ENCODE measurements at regions of chr2 and their contacts with region 1.

Region 1: DNA sequence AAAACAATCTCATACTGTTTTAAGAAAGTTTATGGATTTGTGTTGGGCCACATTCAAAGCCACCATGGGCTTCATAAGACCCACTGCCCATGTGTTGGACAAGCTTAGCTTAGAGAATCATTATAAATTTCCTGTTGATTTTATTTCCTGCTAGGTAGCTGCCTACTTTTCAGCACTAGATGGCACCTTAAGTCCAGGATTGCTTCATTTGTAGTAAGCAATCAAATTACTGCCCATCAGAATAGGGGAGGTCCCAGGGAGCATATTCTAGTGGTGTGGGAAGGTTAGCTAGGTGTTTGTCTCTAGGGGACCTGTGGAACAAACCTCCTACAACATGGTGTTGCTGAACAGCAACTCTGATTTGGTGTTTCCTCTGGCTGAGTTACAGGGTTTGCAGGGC is 11.0 kb upstream of the DCDC2C start:
- DNase-seq: peak; percentile 48
- H3K4me3 Mint-ChIP-seq: no peak overlapping the region
- H3K27ac Mint-ChIP-seq: no peak overlapping the region
- H3K4me1 Mint-ChIP-seq: no peaks in the 10 kb centered on the region
- H3K27me3 Mint-ChIP-seq: peaks cover 22% of the 10 kb centered on the region
- CTCF ChIP-seq: peak; percentile 72

Region 2: DNA sequence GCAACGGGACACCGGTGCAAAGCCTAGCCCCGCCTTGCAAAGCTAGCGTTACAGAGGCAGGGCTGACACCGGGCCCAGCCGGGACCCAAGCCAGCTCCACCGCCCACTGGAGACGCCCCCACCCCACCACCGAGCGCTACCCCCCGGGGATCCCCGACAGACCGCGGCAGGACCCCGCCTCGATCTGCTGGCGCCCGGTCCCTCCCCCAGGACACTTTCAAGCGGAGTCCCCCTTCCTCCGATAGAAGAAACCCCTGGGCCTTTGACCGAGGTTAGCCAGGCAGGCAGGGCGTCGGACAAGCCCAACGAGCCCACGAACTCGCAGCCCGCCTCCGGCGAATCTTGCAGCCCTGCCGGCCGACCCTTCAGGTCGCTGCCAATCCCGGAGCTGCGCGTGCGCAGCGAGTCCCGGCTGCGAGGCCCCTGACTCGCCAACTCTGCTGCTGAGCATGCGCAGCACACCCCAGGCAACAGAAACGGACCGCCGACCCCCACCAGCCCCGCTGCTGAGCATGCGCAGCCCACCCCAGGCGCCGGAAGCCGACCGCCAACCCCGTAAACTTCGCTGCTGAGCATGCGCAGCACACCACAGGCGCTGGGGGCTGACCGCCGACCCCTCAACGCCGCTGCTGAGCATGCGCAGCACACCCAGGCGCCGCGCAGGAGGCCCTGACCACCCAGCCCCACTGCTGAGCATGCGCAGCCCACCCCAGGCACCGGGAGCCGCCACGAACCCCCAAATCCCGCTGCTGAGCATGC is 173.7 kb before region 1 on chr2:
- CTCF ChIA-PET with region 1: no interaction called
- POLR2A ChIA-PET with region 1: no interaction called
- intact Hi-C with region 1: no loop called
- DNase-seq: peak; percentile 92
- H3K4me3 Mint-ChIP-seq: peak overlapping the region; percentile 78
- H3K27ac Mint-ChIP-seq: peak overlapping the region; percentile 65
- H3K4me1 Mint-ChIP-seq: peaks cover 26% of the 10 kb centered on the region
- H3K27me3 Mint-ChIP-seq: no peaks in the 10 kb centered on the region
- CTCF ChIP-seq: no peak

Region 3: GRCh38 chr2:3677436-3677835 is 14.9 kb before region 1 on chr2:
- CTCF ChIA-PET with region 1: interaction called, 13 read pairs
- POLR2A ChIA-PET with region 1: no interaction called
- intact Hi-C with region 1: no loop called
- DNase-seq: no peak
- H3K4me3 Mint-ChIP-seq: no peak overlapping the region
- H3K27ac Mint-ChIP-seq: no peak overlapping the region
- H3K4me1 Mint-ChIP-seq: no peaks in the 10 kb centered on the region
- H3K27me3 Mint-ChIP-seq: peaks cover 15% of the 10 kb centered on the region
- CTCF ChIP-seq: no peak

Region 4: DNA sequence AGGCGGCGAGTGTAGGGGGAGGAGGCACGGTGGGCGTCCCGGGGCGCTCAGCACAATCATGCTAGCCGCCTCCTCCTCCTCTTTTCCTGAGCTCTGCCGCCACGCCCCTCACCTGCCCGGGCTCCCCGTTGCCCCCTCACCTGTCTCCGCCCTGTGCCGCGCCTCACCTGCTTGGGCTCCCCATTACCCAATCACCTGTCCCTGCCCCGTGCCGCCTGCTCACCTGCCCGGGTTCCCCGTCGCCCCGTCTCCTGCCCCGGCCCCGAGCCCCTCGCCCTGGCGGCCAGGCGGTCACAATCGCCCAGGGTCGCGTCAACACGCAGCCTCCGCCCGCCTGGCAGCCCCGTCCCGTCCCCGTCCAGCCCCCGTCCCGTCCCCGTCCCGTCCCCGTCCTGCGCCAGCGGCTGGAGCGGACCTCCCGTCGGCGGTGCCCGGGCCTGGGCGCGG is 10.9 kb after region 1 on chr2 and contains the start of gene DCDC2C:
- CTCF ChIA-PET with region 1: interaction called, 10 read pairs
- POLR2A ChIA-PET with region 1: no interaction called
- intact Hi-C with region 1: no loop called
- DNase-seq: no peak
- H3K4me3 Mint-ChIP-seq: no peak within 1 kb of the TSS
- H3K27ac Mint-ChIP-seq: no peak within 1 kb of the TSS
- H3K4me1 Mint-ChIP-seq: peaks cover 5% of the 10 kb centered on the region
- H3K27me3 Mint-ChIP-seq: peaks cover 22% of the 10 kb centered on the region
- CTCF ChIP-seq: no peak
- total RNA-seq, gene DCDC2C: not detected in 2 replicates

Region 5: GRCh38 chr2:3827673-3828575 is 135.5 kb after region 1 on chr2:
- CTCF ChIA-PET with region 1: interaction called, 15 read pairs
- POLR2A ChIA-PET with region 1: no interaction called
- intact Hi-C with region 1: no loop called
- DNase-seq: peak; percentile 70
- H3K4me3 Mint-ChIP-seq: no peak overlapping the region
- H3K27ac Mint-ChIP-seq: no peak overlapping the region
- H3K4me1 Mint-ChIP-seq: peaks cover 23% of the 10 kb centered on the region
- H3K27me3 Mint-ChIP-seq: no peaks in the 10 kb centered on the region
- CTCF ChIP-seq: peak; percentile 55

Region 6: GRCh38 chr2:3959372-3959771 is 267.0 kb after region 1 on chr2:
- CTCF ChIA-PET with region 1: interaction called, 7 read pairs
- POLR2A ChIA-PET with region 1: no interaction called
- intact Hi-C with region 1: loop called (anchors 5 kb)
- DNase-seq: peak; percentile 46
- H3K4me3 Mint-ChIP-seq: no peak overlapping the region
- H3K27ac Mint-ChIP-seq: no peak overlapping the region
- H3K4me1 Mint-ChIP-seq: peaks cover 10% of the 10 kb centered on the region
- H3K27me3 Mint-ChIP-seq: no peaks in the 10 kb centered on the region
- CTCF ChIP-seq: peak; percentile 55

Region 7: DNA sequence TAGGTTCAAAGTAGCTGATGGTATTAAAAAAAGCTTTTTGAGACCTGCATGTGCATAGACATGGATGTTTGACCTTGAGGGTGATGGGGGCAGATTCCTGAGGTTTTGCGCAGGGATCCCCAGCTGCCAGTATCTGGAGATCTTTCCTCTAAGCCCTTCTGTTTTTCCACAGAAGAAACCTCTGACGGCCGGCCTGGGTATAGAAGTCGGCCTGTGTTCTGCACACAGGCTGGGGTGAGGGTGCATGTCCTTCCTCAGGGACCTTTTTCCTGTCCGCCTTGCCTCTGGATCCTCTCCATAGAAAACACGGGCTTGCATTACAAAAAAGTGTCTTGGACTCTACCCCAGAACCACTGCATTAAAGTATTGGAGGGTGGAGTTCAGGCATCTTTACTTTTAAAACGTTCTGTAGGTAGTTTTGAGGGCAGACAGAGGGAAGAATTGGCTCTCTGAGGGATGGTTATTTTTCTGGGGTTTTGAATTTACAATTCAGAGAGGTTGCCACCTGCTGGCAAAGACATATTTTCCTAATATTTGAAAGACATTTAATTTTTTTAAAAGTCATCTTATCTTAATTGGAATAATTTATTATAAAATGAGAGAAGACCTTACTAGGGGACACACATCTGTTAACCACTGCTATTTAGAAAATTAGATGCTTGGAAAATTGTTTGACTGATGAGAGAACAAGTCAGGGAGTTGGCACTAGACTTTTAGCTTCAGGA is 361.6 kb after region 1 on chr2:
- CTCF ChIA-PET with region 1: interaction called, 6 read pairs
- POLR2A ChIA-PET with region 1: no interaction called
- intact Hi-C with region 1: loop called (anchors 1 kb)
- DNase-seq: peak; percentile 3
- H3K4me3 Mint-ChIP-seq: no peak overlapping the region
- H3K27ac Mint-ChIP-seq: no peak overlapping the region
- H3K4me1 Mint-ChIP-seq: peaks cover 7% of the 10 kb centered on the region
- H3K27me3 Mint-ChIP-seq: no peaks in the 10 kb centered on the region
- CTCF ChIP-seq: peak; percentile 32

Measured in MCF 10A (cell line).